ENCODE measurements at regions of chr18 and their contacts with region 1.

Region 1: DNA sequence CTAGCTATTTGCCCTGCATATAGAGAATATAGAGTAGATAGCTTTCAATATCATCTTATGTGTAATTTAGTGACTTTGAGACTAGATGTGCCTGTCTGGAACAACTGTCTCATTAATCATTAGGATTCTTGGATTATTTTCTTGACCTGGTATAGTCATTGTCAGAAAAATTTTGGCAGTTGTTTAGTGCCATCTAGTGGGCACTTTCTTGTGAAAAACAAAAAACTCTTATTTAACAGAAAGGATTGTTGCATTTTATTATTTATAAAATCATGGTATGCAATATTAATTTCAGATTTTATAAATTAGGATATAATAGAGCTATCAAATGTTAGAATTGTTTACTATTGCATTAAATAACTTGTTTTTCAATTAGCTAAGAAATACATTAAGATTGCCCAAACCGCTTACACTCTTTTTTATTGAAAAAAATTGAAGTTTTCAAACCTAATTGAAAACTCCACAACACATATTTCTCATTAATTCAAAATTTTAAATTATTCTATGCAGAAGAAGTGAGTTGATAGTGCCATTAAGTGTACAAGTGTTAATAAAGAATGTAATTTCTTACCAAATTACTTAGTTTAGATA is 80.3 kb downstream of the DYNAP start:
- DNase-seq: peak in 1 of 2 donors; percentile 49
- ATAC-seq: no peak
- H3K4me3 ChIP-seq: no peak overlapping the region
- H3K4me3 Mint-ChIP-seq: no peak overlapping the region
- H3K27ac ChIP-seq: no peak overlapping the region
- H3K27ac Mint-ChIP-seq: no peak overlapping the region
- H3K4me1 ChIP-seq: no peaks in the 10 kb centered on the region
- H3K4me1 Mint-ChIP-seq: no peaks in the 10 kb centered on the region
- H3K27me3 ChIP-seq: no peaks in the 10 kb centered on the region
- H3K27me3 Mint-ChIP-seq: peaks cover 7 to 8% of the 10 kb centered on the region in 2 donors
- CTCF ChIP-seq: peak; percentile 74

Region 2: GRCh38 chr18:54392543-54393023 is 278.8 kb before region 1 on chr18:
- intact Hi-C with region 1: loop called (anchors 1 kb)
- DNase-seq: peak in 1 of 2 donors; percentile 75
- ATAC-seq: peak; percentile 66 to 76 (median 71)
- H3K4me3 ChIP-seq: no peak overlapping the region
- H3K4me3 Mint-ChIP-seq: no peak overlapping the region
- H3K27ac ChIP-seq: no peak overlapping the region
- H3K27ac Mint-ChIP-seq: no peak overlapping the region
- H3K4me1 ChIP-seq: peaks cover 5% of the 10 kb centered on the region
- H3K4me1 Mint-ChIP-seq: peaks cover 13% of the 10 kb centered on the region in 2 donors
- H3K27me3 ChIP-seq: no peaks in the 10 kb centered on the region
- H3K27me3 Mint-ChIP-seq: no peaks in the 10 kb centered on the region
- CTCF ChIP-seq: peak; percentile 80